Right cardiac atrium (tissue), 5 donors: ENCODE measurements at regions of chr1 and their contacts with region 1.

Region 1: DNA sequence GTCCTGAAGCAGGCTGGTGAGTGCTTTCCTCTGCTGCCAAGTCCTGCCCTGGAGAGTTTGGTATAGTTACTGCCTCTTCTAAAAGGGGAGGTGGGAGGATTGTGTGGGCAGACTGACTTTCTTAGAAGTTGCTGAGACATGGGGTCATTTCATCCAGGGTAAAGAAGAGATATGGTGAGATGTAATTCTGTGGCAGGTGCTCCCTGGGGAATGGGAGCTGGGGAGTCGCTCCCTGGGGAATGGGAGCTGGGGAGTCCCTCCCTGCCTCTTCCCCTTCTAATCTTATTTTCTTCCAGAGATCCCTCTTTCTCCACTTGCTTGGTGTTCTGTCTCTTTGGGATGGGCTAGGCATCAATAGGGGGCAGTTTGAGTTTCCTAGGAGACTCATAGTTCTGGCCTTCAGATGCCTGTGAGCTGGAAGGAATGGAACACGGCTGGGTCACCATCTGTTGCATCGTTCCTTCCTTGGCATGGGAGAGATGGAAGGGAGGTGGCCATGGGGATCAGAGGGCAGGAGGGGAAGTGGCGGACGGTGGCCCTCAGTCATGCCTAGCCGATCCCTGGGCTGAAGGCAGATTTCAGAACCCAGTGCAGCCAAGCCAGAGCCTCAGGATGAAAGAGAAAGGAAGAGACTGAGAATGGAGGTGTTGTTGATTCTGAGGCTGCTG is 59.0 kb downstream of the NFASC start:
- DNase-seq: no peak
- ATAC-seq: no peak
- H3K4me3 ChIP-seq: no peak overlapping the region
- H3K27ac ChIP-seq: no peak overlapping the region
- H3K4me1 ChIP-seq: peaks cover 12% of the 10 kb centered on the region
- H3K27me3 ChIP-seq: no peaks in the 10 kb centered on the region

Region 2: GRCh38 chr1:204736836-204737387 is 192.7 kb before region 1 on chr1:
- intact Hi-C with region 1: no loop called
- DNase-seq: no peak
- ATAC-seq: no peak
- H3K4me3 ChIP-seq: no peak overlapping the region
- H3K27ac ChIP-seq: no peak overlapping the region
- H3K4me1 ChIP-seq: no peaks in the 10 kb centered on the region
- H3K27me3 ChIP-seq: no peaks in the 10 kb centered on the region

Region 3: GRCh38 chr1:204828338-204828850 is 101.2 kb before region 1 on chr1:
- intact Hi-C with region 1: loop called in 1 of 4 experiments (anchors 5 kb)
- DNase-seq: peak; percentile 75 to 93 (median 92)
- ATAC-seq: peak; percentile 93 to 94
- H3K4me3 ChIP-seq: peak overlapping the region; percentile 74
- H3K27ac ChIP-seq: peak overlapping the region; percentile 70
- H3K4me1 ChIP-seq: peaks cover 5% of the 10 kb centered on the region
- H3K27me3 ChIP-seq: no peaks in the 10 kb centered on the region

Region 4: DNA sequence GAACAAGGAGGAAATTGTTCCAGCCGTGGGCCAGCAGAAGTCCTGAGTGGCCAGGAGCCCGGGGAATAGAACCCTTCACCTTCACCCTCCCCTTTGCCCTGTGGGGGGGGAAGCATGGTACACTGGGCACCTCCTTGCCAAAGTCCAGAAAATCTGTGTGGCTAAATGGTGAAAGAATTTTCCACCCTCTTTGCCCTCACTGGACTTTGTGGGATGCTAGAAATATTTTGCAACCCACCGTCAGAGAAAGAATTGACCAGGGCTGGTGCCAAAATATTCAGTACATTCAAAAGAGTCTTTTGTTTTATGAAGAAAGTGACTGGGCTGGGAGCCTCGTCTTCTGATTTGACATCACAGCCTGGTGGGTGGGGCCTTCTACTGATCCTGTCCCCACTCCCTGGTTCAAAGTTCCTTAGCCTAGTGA is 44.3 kb before region 1 on chr1:
- intact Hi-C with region 1: loop called in 1 of 4 experiments (anchors 10 kb)
- DNase-seq: peak in 2 of 3 donors; percentile 68 to 84
- ATAC-seq: peak; percentile 60 to 64
- H3K4me3 ChIP-seq: no peak overlapping the region
- H3K27ac ChIP-seq: peak overlapping the region; percentile 72
- H3K4me1 ChIP-seq: peaks cover 17% of the 10 kb centered on the region
- H3K27me3 ChIP-seq: no peaks in the 10 kb centered on the region